ENCODE measurements at regions of chr3 and their contacts with region 1.

Region 1: DNA sequence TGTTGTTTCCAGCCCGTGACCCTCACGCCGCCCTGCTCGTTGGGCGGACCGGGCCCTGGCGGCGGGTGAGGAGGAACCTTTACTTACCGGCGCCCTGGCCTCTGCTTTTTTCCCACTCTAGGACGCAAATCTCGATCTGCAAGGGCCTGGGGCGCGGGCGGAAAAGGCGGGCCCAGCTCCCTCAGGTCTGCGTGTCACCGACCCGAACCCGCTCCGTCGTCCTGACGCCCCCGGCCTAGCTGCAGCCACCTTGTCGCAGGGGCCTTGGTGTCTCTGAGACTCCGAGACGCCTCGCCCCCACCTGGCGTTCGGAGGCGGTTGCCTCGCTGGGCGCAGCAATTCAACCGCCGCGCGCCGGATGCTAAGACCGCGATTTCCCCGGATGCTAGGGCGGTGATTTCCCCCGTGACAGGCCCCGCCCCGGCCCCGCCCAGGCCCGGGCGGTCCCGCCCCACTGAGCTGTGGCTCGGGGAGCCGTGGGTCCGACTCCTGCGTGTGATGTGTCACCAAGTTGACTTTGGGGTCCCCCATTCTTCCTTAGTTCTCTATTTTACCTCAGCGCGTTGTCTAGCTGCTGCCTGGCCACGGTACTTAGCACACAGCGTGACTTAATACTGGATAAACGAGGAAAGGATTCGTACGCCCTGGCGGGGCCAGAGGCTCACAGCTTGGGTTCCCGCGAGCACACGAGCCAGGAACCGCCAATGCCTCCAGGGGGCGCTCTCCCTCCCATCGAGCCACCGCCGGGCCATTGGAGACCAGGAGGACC is at the start of gene RPL39L:
- DNase-seq: peak; percentile 97
- ATAC-seq: peak; percentile 97
- H3K4me3 Mint-ChIP-seq: peak within 1 kb of the TSS; percentile 90
- H3K27ac Mint-ChIP-seq: peak within 1 kb of the TSS; percentile 96
- H3K4me1 Mint-ChIP-seq: peaks cover 21% of the 10 kb centered on the region
- H3K27me3 Mint-ChIP-seq: no peaks in the 10 kb centered on the region
- total RNA-seq, gene RPL39L: 17.8 to 25.0 TPM

Region 2: GRCh38 chr3:186849374-186849975 is 289.8 kb before region 1 on chr3:
- CTCF ChIA-PET with region 1: interaction called, 23 read pairs
- DNase-seq: no peak
- ATAC-seq: peak; percentile 90
- H3K4me3 Mint-ChIP-seq: no peak overlapping the region
- H3K27ac Mint-ChIP-seq: no peak overlapping the region
- H3K4me1 Mint-ChIP-seq: peaks cover 11% of the 10 kb centered on the region
- H3K27me3 Mint-ChIP-seq: peaks cover 14% of the 10 kb centered on the region

Region 3: DNA sequence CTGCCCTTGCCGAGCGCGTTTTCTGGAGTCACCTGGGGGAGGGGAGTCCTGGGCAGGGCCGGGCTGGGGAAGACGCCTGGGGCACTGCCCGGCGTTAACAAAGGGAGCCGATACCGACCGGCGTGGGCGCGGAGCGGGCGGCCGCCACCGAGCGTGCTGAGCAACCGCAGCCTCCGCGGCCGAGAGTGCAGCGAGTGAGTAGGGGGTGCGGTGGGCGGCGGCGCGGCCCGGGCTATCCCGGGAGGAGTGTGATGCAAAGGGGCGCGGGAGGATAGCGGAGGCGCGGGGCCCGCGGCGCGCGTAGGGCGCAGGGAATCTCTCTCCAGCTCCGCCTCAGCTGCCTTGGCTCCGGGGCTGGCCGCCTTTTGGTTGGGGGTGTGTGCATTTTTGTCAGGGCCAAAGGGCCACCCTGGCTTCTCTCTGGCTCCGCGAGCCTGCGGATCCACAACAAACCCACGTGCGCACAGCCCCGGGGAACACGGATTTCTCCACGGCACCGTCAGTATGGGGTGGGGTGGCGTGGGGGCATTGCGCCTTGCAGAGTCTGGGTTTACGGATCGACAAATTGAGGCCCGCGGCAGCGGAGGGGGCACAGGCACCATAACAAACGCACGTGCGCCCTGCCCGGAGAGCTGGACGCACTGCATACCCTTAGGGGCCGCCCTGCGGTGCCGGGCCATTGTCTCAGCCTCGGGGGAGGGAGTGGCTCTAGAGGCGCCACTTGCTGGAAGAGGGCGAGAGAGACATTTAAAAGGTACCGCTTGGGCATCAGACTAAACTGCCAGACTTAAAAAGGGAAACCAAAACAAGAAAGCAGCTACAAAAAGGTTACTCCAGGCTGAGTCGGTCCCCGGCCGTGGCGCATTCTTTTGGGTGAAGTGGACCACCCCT is 208.4 kb before region 1 on chr3:
- CTCF ChIA-PET with region 1: interaction called, 10 read pairs
- DNase-seq: peak; percentile 81
- ATAC-seq: peak; percentile 72
- H3K4me3 Mint-ChIP-seq: peak overlapping the region; percentile 88
- H3K27ac Mint-ChIP-seq: peak overlapping the region; percentile 87
- H3K4me1 Mint-ChIP-seq: peaks cover 36% of the 10 kb centered on the region
- H3K27me3 Mint-ChIP-seq: no peaks in the 10 kb centered on the region

Region 4: DNA sequence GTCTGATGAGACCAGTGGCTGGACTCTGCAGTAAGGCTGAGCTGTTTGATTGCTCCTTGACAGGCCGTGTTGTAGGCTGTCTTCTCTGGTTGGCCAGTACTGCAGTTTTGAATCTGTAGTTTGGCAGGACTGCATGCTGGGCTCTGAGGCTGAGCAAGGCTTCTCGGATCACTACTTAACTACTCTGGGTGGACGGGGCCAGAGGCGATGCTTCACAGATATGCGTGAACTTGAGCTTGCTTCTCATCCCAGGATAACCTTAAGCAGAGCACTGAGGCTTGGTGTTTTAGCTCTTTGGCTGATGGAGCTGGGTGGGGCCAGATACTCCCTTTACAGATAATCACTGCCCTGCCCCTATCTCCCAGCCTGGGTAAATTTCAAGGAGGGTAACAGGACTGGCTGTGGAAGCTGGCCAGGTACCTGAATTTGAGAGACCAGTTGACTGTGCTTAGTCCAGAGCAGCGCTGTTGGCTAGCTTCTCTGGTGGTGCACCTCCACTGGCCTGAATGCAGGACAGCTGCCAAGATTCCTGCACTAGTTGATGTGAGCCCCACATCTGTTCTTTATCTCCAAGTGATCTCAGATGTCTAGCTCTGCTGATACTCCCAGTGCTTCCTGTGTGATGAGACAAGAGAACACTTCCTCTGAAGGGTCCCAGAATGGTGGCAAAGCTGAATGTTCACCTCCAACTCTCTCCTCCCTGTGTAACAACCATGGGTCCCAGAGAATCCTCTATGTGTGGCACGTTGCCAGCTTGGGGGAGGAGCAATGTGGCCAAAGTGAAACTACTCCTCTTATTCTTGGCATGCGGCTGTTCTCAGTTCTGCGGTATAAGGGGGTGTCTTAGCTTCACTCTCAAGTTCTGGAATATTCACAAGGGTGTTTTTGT is 37.9 kb before region 1 on chr3:
- CTCF ChIA-PET with region 1: interaction called, 14 read pairs
- DNase-seq: peak; percentile 71
- ATAC-seq: peak; percentile 81
- H3K4me3 Mint-ChIP-seq: peak overlapping the region; percentile 52
- H3K27ac Mint-ChIP-seq: peak overlapping the region; percentile 52
- H3K4me1 Mint-ChIP-seq: peaks cover 52% of the 10 kb centered on the region
- H3K27me3 Mint-ChIP-seq: peaks cover 2% of the 10 kb centered on the region

Region 5: DNA sequence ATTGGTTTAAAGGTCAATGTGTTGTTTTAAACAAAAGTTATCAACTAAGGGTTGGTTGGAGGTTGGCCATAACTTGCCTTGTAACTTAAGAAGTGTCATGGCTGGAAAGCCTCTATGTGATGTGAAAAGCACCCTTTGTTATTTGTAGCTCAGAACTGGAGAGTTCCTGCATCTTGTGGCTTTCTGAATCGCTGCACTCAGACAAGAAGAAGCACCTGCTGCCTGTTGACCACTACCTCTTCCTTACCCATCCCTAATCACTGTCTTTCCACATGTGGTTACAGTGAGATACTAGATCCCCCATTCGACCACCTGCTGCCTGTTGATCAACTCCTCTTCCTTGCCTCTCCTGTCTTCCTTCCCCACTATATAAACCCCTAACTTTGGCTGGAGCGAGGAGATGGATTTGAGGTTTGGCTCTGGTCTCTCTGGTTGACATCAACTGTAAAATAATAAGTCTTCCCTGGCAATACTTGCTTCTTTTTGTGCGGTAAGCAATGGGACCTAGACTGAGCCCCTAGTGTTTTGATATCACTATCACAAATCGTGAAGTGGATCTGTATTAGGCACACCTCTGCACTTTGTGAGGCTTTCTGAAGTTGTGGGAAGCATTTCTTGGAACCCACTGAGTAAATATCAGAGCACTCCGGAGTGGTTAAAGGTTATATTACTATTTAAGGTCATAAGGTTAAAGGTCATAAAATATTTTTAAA is 13.8 kb before region 1 on chr3:
- CTCF ChIA-PET with region 1: interaction called, 55 read pairs
- DNase-seq: no peak
- ATAC-seq: no peak
- H3K4me3 Mint-ChIP-seq: no peak overlapping the region
- H3K27ac Mint-ChIP-seq: no peak overlapping the region
- H3K4me1 Mint-ChIP-seq: peaks cover 22% of the 10 kb centered on the region
- H3K27me3 Mint-ChIP-seq: no peaks in the 10 kb centered on the region

Region 6: GRCh38 chr3:187164885-187165543 is 25.7 kb after region 1 on chr3:
- CTCF ChIA-PET with region 1: interaction called, 51 read pairs
- DNase-seq: peak; percentile 46
- ATAC-seq: peak; percentile 70
- H3K4me3 Mint-ChIP-seq: no peak overlapping the region
- H3K27ac Mint-ChIP-seq: no peak overlapping the region
- H3K4me1 Mint-ChIP-seq: peaks cover 3% of the 10 kb centered on the region
- H3K27me3 Mint-ChIP-seq: peaks cover 40% of the 10 kb centered on the region